Heart left ventricle (tissue), 16 donors: ENCODE measurements at regions of chr12 and their contacts with region 1.

Region 1: DNA sequence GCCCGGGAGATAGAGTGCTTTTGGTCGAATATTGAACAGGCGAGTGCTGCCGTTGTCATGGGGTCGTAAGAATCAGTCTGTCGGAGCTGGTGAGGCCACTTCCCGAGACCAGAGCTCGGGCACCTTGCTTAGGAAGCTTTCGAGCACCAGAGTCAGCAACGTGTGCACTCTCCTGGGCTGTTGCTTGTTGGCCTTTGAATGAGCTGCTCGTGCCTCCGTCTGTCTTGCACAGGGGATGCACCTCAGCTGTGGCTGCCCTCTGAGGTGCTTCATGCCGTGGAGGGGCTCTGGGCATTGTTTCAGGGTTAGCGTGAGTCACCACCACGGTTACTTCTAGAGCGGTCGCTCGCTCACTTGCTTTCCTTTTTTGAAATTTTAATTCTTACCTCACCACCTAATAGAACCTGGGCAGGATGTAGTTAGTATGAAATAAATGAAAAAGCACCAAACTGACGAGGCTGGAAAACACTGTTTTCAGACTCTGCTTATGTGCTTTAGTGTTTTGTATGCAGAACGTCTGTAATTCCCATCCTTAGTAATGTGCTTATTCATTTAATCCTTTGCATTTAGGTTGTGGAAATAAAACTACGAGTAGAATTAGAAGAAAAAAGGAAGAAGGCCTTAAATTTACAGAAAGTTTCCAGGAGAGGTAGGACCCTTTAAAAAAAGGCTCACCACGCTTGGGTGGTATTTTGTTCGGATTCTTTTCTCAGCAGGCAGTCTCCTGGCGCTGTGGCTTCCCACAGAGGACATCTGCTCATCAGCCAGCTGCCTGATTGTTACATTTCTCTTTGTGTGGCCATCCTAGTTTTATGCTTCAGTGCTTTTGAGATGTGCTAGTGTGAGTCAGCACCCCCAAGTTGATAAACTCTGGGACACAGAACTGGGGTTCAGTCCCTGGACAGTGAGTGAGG is 40.6 kb downstream of the EP400 start:
- DNase-seq: no peak
- ATAC-seq: no peak
- H3K4me3 ChIP-seq: no peak overlapping the region
- H3K27ac ChIP-seq: no peak overlapping the region
- H3K4me1 ChIP-seq: peaks cover 0 to 7% (median 0%) of the 10 kb centered on the region in 12 donors
- H3K27me3 ChIP-seq: no peaks in the 10 kb centered on the region
- CTCF ChIP-seq: no peak
- POLR2A ChIP-seq: no peak

Region 2: DNA sequence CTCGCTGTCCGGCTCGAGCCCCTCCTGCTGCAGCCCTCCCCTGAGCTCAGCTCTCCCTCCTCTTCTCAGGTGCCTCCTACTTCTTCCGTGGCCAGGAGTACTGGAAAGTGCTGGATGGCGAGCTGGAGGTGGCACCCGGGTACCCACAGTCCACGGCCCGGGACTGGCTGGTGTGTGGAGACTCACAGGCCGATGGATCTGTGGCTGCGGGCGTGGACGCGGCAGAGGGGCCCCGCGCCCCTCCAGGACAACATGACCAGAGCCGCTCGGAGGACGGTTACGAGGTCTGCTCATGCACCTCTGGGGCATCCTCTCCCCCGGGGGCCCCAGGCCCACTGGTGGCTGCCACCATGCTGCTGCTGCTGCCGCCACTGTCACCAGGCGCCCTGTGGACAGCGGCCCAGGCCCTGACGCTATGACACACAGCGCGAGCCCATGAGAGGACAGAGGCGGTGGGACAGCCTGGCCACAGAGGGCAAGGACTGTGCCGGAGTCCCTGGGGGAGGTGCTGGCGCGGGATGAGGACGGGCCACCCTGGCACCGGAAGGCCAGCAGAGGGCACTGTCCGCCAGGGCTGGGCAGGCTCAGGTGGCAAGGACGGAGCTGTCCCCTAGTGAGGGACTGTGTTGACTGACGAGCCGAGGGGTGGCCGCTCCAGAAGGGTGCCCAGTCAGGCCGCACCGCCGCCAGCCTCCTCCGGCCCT is 139.3 kb before region 1 on chr12:
- intact Hi-C with region 1: loop called in 1 of 10 experiments (anchors 10 kb)
- DNase-seq: peak in 3 of 5 donors; percentile 18 to 60 (median 49)
- ATAC-seq: peak in 2 of 4 donors; percentile 85 to 86
- H3K4me3 ChIP-seq: no peak overlapping the region
- H3K27ac ChIP-seq: no peak overlapping the region
- H3K4me1 ChIP-seq: peaks cover 0 to 7% (median 0%) of the 10 kb centered on the region in 12 donors
- H3K27me3 ChIP-seq: peaks cover 0 to 24% (median 6%) of the 10 kb centered on the region in 9 donors
- CTCF ChIP-seq: peak in 6 of 12 donors; percentile 43 to 83 (median 70)
- POLR2A ChIP-seq: no peak